Activated T-helper 1 cell treated with anti-CD3 and anti-CD28 coated beads, Interleukin-12 subunit alpha, Interleukin-12 subunit beta, Interleukin-2, Interleukin-4 antibody, amounts not matched to agents 30 ng/mL and 10 ng/mL and 1 ng/mL, durations not matched to agents 14 hours and 24 hours and 36 hours (primary cell): ENCODE measurements at regions of chr1 and their contacts with region 1.

Region 1: DNA sequence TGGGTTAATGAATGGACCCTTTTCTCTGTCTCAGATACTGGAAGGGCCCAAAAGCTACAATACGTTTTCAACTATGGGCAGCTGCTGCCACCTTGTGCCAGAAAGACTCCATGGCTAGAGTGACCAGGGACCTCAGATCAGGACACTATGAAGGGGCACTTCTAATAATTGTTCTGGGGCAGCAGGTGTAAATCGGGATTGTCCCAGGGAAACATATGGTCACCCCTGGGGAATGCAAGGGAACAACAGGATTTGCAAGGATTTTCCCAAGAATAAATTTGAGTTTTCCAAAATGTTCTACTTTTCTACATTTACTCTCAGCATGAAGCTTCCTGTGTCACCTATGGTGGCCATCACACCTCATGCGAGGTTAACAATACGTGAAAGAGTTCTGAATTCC is 12.0 kb upstream of the FCAMR start:
- DNase-seq: peak; percentile 36
- H3K4me3 Mint-ChIP-seq: no peak overlapping the region
- H3K27ac Mint-ChIP-seq: no peak overlapping the region
- H3K4me1 Mint-ChIP-seq: no peaks in the 10 kb centered on the region
- H3K27me3 Mint-ChIP-seq: peaks cover 34% of the 10 kb centered on the region

Region 2: GRCh38 chr1:206635080-206635977 is 346.9 kb before region 1 on chr1 and contains the start of gene DYRK3:
- intact Hi-C with region 1: loop called (anchors 1 kb)
- DNase-seq: peak; percentile 95
- H3K4me3 Mint-ChIP-seq: peak within 1 kb of the TSS; percentile 89
- H3K27ac Mint-ChIP-seq: peak within 1 kb of the TSS; percentile 95
- H3K4me1 Mint-ChIP-seq: peaks cover 38% of the 10 kb centered on the region
- H3K27me3 Mint-ChIP-seq: peaks cover 7% of the 10 kb centered on the region
- total RNA-seq, gene DYRK3: 22.1 and 23.3 TPM in 2 replicates

Region 3: GRCh38 chr1:206734499-206735142 is 247.6 kb before region 1 on chr1:
- intact Hi-C with region 1: loop called (anchors 2 kb)
- DNase-seq: peak; percentile 56
- H3K4me3 Mint-ChIP-seq: no peak overlapping the region
- H3K27ac Mint-ChIP-seq: no peak overlapping the region
- H3K4me1 Mint-ChIP-seq: peaks cover 61% of the 10 kb centered on the region
- H3K27me3 Mint-ChIP-seq: no peaks in the 10 kb centered on the region

Region 4: GRCh38 chr1:206865013-206865671 is 117.1 kb before region 1 on chr1 and contains the start of gene IL20:
- intact Hi-C with region 1: loop called (anchors 2 kb)
- DNase-seq: peak; percentile 68
- H3K4me3 Mint-ChIP-seq: no peak within 1 kb of the TSS
- H3K27ac Mint-ChIP-seq: no peak within 1 kb of the TSS
- H3K4me1 Mint-ChIP-seq: peaks cover 7% of the 10 kb centered on the region
- H3K27me3 Mint-ChIP-seq: peaks cover 39% of the 10 kb centered on the region
- total RNA-seq, gene IL20: not detected in 2 replicates

Region 5: DNA sequence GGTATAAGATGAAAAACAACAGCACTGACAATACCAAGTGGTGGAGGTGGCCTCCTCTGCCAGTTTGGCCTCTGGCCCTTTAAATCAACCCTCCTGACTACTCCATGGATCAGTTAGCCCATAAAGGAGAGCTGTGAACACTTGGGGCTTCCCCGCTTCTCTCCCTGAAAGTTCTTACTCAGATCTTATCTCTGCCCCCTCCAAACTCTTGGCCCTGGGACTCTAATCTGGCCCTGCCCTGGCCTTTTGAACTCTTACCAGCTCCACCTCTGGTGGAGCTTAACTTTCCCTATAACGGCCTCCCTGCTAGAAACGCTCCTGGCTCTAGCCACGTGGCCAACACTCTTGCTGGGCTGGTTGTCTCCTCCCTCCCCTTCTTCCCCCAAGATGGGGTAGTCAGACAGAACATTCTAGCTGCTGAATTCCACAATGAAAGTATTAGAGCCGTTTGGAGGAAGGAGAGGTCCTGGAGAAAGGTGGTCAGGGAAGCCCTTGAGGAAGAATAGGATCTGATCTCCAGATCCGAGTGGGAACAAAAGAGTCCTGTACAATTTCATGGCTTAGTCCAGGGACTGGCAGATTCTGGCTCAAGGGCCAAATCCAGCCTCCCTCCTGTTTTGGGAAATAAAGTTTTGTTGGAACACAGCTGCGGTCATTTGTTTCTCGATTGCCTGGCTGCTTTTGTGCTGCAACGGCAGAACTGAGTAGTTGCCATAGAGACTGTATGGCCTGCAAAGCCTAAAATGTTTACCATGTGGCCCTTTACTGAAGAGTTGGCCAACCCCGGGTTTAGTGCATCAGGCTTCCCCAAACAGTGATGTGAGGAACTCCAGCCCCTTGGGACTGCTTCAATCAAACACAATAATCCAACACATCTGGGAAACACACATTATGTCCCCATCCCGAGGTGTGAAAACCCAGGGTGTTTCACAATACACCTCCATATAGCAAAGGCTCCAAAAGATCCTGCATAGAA is 26.5 kb before region 1 on chr1:
- intact Hi-C with region 1: no loop called
- DNase-seq: no peak
- H3K4me3 Mint-ChIP-seq: no peak overlapping the region
- H3K27ac Mint-ChIP-seq: no peak overlapping the region
- H3K4me1 Mint-ChIP-seq: peaks cover 18% of the 10 kb centered on the region
- H3K27me3 Mint-ChIP-seq: no peaks in the 10 kb centered on the region